GM12878 (cell line): ENCODE measurements at regions of chr6 and their contacts with region 1.

Region 1: DNA sequence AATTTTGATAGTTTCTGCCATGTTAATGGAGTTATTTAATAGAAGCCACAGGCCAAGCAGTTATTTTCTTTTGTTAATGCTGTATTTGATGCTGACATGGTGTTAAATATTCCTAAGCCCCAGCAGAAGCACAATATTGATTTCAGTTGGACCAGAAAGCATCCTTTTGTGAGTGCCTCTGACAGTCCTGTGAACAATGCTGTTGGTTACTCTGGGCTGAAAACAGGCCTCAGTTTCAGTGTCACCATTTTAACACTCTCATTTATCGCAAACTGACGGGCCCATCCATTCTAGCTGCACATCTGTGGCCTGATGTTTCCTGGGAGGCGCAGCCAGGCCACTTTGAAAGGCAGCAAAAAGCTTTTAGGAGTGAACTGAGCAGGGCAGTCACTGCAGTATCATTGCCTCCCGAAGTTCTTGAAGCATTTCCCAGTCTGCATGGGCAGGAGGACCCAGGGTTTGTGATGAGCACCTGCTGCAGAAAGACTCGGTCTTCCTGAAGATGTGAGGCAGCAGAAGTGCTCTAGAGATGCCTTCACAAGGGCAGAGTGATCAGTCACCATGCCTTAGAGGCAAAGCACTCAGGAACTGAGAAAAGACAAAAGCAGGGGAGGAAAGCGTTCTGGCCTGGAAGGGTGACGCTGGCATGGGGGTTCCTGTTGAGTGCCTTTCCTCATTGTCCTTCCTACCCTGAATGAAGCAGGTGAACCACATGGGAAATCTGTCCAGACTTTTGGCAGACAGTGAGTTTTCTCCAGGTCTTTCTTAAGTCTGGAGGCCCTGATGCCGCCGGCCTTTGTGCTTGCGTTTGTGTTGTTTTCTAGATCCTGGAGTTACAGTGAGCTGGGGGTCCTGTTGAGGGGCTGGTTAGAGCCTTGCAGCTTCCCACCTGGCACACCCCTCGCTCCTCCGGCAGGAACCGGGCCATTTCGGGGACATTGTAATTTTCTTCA is 74.0 kb downstream of the ZDHHC14 start:
- DNase-seq: no peak
- ATAC-seq: no peak
- H3K4me3 ChIP-seq: no peak overlapping the region
- H3K27ac ChIP-seq: no peak overlapping the region
- H3K4me1 ChIP-seq: peaks cover 13% of the 10 kb centered on the region
- H3K27me3 ChIP-seq: no peaks in the 10 kb centered on the region
- CTCF ChIP-seq: no peak
- EP300 ChIP-seq: no peak
- POLR2A ChIP-seq: no peak
- RAD21 ChIP-seq: no peak

Region 2: GRCh38 chr6:157443066-157443800 is 11.8 kb before region 1 on chr6:
- CTCF ChIA-PET with region 1: no interaction called
- POLR2A ChIA-PET with region 1: interaction called, 5 read pairs
- RAD21 ChIA-PET with region 1: interaction called, 9 read pairs
- SMC1A ChIA-PET with region 1: interaction called, 88 read pairs
- in situ Hi-C with region 1: no loop called
- intact Hi-C with region 1: loop called (anchors 2 kb)
- DNase-seq: peak; percentile 80
- ATAC-seq: peak; percentile 97
- H3K4me3 ChIP-seq: no peak overlapping the region
- H3K27ac ChIP-seq: no peak overlapping the region
- H3K4me1 ChIP-seq: 0 out of 2 replicates have a peak, but pooled peaks cover 3% of the 10 kb centered on the region
- H3K27me3 ChIP-seq: no peaks in the 10 kb centered on the region
- CTCF ChIP-seq: no peak
- EP300 ChIP-seq: peak; percentile 84 to 87
- POLR2A ChIP-seq: no peak
- RAD21 ChIP-seq: no peak